OCI-LY7 (cell line): ENCODE measurements at regions of chr16 and their contacts with region 1.

Region 1: GRCh38 chr16:75464130-75464918 is at the start of gene TMEM170A:
- DNase-seq: peak; percentile 99
- H3K4me3 ChIP-seq: peak within 1 kb of the TSS; percentile 85
- H3K27ac ChIP-seq: peak within 1 kb of the TSS; percentile 51
- H3K4me1 ChIP-seq: peaks cover 10% of the 10 kb centered on the region
- CTCF ChIP-seq: peak; percentile 100
- total RNA-seq, gene TMEM170A: 25.7 and 29.0 TPM in 2 replicates

Region 2: DNA sequence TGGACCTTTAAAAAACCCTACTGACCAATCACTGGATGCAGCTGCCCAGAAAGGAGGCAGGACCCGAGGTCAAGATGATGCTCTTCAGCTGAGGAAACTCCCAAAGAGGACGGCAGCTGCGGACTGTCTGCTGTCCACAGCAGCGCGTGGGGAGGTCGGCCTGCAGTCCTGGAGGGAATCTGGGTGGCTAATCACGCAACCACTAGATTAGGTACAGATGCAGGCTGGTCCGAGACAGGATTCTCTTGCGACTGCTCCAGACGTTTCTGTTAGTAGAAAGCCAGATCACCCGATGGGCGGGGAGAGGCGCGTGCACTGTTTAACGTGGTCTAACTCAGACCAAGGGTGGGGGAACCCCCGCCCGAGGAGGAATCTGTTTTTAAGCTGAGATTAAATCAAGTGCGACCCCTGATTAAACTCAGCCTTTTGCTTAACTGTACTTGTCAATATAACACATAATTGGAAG is 266.2 kb before region 1 on chr16:
- CTCF ChIA-PET with region 1: no interaction called
- POLR2A ChIA-PET with region 1: no interaction called
- intact Hi-C with region 1: loop called (anchors 1 kb)
- DNase-seq: no peak
- H3K4me3 ChIP-seq: no peak overlapping the region
- H3K27ac ChIP-seq: no peak overlapping the region
- H3K4me1 ChIP-seq: peaks cover 10% of the 10 kb centered on the region
- CTCF ChIP-seq: no peak

Region 3: GRCh38 chr16:75432828-75433731 is 31.2 kb before region 1 on chr16 and contains the start of gene CFDP1:
- CTCF ChIA-PET with region 1: no interaction called
- POLR2A ChIA-PET with region 1: interaction called, 3 read pairs
- intact Hi-C with region 1: loop called (anchors 1 kb)
- DNase-seq: peak; percentile 97
- H3K4me3 ChIP-seq: peak within 1 kb of the TSS; percentile 78
- H3K27ac ChIP-seq: no peak within 1 kb of the TSS
- H3K4me1 ChIP-seq: peaks cover 20% of the 10 kb centered on the region
- CTCF ChIP-seq: no peak
- total RNA-seq, gene CFDP1: 30.0 and 55.1 TPM in 2 replicates

Region 4: GRCh38 chr16:75555707-75556430 is 91.5 kb after region 1 on chr16 and contains the start of gene TMEM231:
- CTCF ChIA-PET with region 1: no interaction called
- POLR2A ChIA-PET with region 1: interaction called, 3 read pairs
- intact Hi-C with region 1: loop called (anchors 2 kb)
- DNase-seq: peak; percentile 95
- H3K4me3 ChIP-seq: peak within 1 kb of the TSS; percentile 85
- H3K27ac ChIP-seq: peak within 1 kb of the TSS; percentile 78
- H3K4me1 ChIP-seq: peaks cover 14% of the 10 kb centered on the region
- CTCF ChIP-seq: 0 out of 2 replicates have a peak, but pooled peaks have one; percentile 20
- total RNA-seq, gene TMEM231: 5.6 and 6.9 TPM in 2 replicates

Region 5: DNA sequence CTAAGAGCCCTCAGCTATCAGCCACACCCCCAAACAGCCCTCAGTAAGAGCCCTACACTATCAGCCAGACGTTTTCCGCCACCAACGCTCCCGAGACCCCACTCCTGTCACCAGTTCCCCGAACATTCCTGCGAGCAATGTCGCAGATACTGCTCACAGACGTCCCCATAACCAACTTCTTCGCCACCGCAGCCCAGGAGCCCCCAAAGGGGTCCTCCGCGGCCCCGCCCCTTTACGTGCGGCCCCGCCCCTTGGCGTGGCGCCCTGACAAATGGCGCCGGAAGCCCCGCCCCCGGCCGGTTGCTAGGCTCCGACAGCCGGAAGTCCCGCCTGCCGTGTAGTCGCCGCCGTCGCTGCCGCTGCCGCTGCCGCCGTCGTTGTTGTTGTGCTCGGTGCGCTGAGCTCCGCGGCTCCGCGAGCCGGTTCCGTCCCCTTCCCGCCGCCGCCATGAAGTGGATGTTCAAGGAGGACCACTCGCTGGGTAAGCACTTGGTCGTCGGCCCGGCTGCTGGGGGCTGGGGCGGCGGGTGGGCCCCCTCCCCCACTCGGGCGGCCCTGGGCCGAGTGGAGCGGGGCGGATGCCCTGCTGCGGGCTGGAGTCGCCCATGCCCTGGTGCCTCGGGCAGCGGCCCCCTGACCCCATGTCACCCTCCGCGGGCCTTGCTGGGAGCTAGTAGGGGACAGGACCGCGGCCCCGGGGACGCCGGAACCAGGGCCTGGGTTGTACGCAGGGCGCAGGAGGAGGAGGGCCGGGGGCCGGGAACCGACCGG is 101.9 kb after region 1 on chr16 and contains the start of gene GABARAPL2:
- CTCF ChIA-PET with region 1: no interaction called
- POLR2A ChIA-PET with region 1: no interaction called
- intact Hi-C with region 1: loop called (anchors 2 kb)
- DNase-seq: peak; percentile 94
- H3K4me3 ChIP-seq: peak within 1 kb of the TSS; percentile 96
- H3K27ac ChIP-seq: peak within 1 kb of the TSS; percentile 49
- H3K4me1 ChIP-seq: peaks cover 57% of the 10 kb centered on the region
- CTCF ChIP-seq: no peak
- total RNA-seq, gene GABARAPL2: 37.0 and 57.7 TPM in 2 replicates

Region 6: GRCh38 chr16:75622761-75623605 is 158.7 kb after region 1 on chr16 and contains the start of gene ADAT1:
- CTCF ChIA-PET with region 1: interaction called, 3 read pairs
- POLR2A ChIA-PET with region 1: no interaction called
- intact Hi-C with region 1: loop called (anchors 2 kb)
- DNase-seq: peak; percentile 98
- H3K4me3 ChIP-seq: peak within 1 kb of the TSS; percentile 82
- H3K27ac ChIP-seq: peak within 1 kb of the TSS; percentile 59
- H3K4me1 ChIP-seq: peaks cover 22% of the 10 kb centered on the region
- CTCF ChIP-seq: no peak
- total RNA-seq, gene ADAT1: 46.8 and 53.4 TPM in 2 replicates

Region 7: GRCh38 chr16:75647492-75648264 is 183.4 kb after region 1 on chr16 and contains the starts of genes KARS1 and TERF2IP:
- CTCF ChIA-PET with region 1: no interaction called
- POLR2A ChIA-PET with region 1: interaction called, 4 read pairs
- intact Hi-C with region 1: loop called (anchors 5 kb)
- DNase-seq: peak; percentile 93
- H3K4me3 ChIP-seq: peak within 1 kb of the TSS; percentile 88
- H3K27ac ChIP-seq: peak within 1 kb of the TSS; percentile 82
- H3K4me1 ChIP-seq: peaks cover 57% of the 10 kb centered on the region
- CTCF ChIP-seq: no peak
- total RNA-seq, gene KARS1: 126 and 143 TPM in 2 replicates
- total RNA-seq, gene TERF2IP: 41.6 and 42.3 TPM in 2 replicates